Common myeloid progenitor, CD34-positive (primary cell): ENCODE measurements at regions of chr10 and their contacts with region 1.

Region 1: GRCh38 chr10:93816123-93816747 is 58.5 kb downstream of the LGI1 start:
- DNase-seq: peak; percentile 45 to 60 (median 60)
- H3K4me3 ChIP-seq: no peak overlapping the region
- H3K27ac ChIP-seq: no peak overlapping the region
- H3K4me1 ChIP-seq: no peaks in the 10 kb centered on the region
- H3K27me3 ChIP-seq: peaks cover 0 to 7% (median 3%) of the 10 kb centered on the region in 5 experiments

Region 2: GRCh38 chr10:93702211-93703001 is 113.8 kb before region 1 on chr10 and contains the start of gene FRA10AC1:
- CTCF ChIA-PET with region 1: interaction called, 10 read pairs
- POLR2A ChIA-PET with region 1: no interaction called
- DNase-seq: peak; percentile 94 to 97 (median 96)
- H3K4me3 ChIP-seq: peak within 1 kb of the TSS; percentile 86 to 97 (median 96)
- H3K27ac ChIP-seq: peak within 1 kb of the TSS; percentile 67 to 89
- H3K4me1 ChIP-seq: peaks cover 7 to 22% (median 11%) of the 10 kb centered on the region in 4 experiments
- H3K27me3 ChIP-seq: no peaks in the 10 kb centered on the region

Region 3: DNA sequence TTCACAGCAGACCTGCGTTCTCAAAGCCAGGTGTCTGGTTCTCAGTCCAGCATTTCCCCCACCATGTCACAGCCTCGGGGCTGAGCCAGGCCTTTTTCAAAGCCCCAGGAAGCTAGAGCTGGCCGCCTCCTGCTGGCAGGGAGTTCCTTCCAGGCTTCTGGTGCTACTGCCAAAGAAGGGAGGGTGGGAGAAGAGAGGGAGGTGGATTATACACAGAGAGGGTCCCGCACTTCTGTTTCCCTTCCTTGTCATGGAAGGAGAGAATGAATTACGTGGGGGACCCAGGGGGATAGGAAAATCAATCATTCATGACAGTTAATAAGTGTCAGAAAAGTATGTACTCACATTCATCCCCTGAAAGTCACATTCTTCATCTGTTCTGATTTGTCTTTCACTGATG is 59.1 kb before region 1 on chr10:
- CTCF ChIA-PET with region 1: no interaction called
- POLR2A ChIA-PET with region 1: no interaction called
- DNase-seq: no peak
- H3K4me3 ChIP-seq: no peak overlapping the region
- H3K27ac ChIP-seq: no peak overlapping the region
- H3K4me1 ChIP-seq: peaks cover 0 to 5% (median 0%) of the 10 kb centered on the region in 4 experiments
- H3K27me3 ChIP-seq: peaks cover 6 to 56% (median 37%) of the 10 kb centered on the region in 5 experiments

Region 4: DNA sequence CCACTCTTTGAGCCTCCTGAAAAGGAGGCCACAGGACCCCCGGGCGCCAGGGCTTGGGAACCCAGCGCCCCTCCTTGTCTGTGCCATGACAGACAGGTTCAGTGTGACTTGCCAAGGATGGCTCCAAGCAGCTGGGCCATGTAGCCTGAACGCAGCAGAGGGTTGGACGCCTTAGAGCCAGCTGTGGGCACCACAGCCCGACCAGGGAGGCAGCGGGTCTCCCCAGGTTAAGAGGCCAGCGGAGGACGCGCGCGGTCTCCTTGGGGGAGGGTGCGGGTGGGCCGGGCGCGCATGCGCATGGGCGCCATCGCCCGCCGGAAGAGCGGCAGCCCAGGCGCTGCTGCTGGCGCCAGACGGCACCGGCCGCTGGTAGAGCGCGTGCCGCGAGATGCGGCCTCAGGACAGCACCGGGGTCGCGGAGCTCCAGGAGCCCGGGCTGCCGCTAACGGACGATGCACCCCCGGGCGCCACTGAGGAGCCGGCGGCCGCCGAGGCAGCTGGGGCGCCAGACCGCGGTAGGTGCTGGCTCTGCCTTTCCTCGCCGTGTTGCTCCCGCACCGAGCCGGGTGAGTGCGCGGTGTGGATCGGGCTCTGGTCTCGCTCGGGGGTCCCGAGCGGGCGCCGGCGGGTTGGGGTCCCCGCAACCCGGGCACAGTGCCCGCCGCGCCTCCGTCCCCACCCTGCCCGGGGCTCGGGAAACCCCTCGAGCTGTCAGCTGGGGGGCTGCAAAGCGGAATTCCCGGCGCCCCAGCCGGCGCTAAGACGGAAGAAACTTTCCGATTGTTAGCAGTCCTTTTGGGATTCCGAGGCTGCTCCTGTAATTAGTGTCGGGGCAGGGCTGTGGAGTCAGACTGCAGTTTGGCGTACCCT is 77.6 kb after region 1 on chr10 and contains the start of gene SLC35G1:
- CTCF ChIA-PET with region 1: no interaction called
- POLR2A ChIA-PET with region 1: no interaction called
- DNase-seq: peak; percentile 64 to 83 (median 79)
- H3K4me3 ChIP-seq: peak within 1 kb of the TSS; percentile 65 to 86 (median 76)
- H3K27ac ChIP-seq: no peak within 1 kb of the TSS
- H3K4me1 ChIP-seq: peaks cover 4 to 22% (median 13%) of the 10 kb centered on the region in 4 experiments
- H3K27me3 ChIP-seq: no peaks in the 10 kb centered on the region

Region 5: DNA sequence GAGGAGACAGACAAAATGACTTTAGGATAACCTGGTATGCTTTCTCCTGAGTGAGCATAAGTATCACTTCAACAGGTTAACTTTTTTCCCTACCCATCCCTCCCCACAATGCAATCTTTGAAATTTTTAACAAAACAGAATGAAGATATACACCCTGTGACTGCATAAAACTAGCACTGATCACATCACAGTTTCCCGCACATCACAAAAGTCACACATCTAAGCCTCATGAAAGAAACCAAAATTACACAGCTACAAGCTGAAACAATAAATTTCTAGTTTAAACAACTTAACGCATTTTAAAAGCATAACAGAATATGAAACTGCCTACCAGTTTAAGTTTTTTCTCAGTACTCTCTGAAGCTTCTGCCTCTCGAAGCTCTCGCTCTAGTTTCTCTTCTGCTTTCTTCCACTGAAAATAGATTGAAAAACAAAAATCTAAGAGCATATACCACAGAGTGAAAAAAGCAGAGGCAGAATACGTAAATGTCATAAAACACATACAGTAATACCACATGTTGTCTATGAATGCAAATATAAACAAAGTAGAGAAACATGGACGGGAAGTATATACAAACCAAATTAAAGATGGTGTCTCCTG is 528.4 kb after region 1 on chr10:
- CTCF ChIA-PET with region 1: no interaction called
- POLR2A ChIA-PET with region 1: no interaction called
- DNase-seq: no peak
- H3K4me3 ChIP-seq: no peak overlapping the region
- H3K27ac ChIP-seq: no peak overlapping the region
- H3K4me1 ChIP-seq: no peaks in the 10 kb centered on the region
- H3K27me3 ChIP-seq: no peaks in the 10 kb centered on the region